GM12878 (cell line): ENCODE measurements at regions of chr3 and their contacts with region 1.

Region 1: DNA sequence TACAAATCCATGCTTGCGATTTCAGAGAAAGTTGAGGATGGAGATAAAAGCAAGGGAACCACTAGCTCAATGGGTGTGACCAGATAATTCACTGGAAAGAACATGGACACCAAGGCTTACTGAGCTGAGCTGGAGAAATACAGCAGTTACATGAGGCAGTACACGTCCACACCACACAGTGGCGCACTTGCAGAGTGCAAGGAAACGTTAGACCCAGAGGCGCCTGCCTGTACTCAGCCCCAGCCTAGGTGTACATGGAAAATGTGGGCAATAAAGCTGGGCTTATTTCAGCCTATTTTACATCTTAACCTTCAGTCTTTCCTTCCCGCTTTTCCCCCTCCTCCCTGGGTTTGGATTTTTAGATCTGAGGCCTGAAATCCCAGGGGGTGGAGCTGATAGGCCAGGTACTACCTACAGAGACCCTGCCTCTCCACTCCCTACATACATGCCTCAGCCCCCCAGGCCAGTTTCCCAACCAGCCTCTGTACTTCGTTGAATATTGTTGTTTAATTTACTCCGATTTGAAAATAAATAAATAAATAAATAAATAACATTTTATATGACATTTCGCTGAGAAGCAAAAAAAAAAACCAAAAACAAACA is 60.1 kb downstream of the PCOLCE2 start:
- DNase-seq: peak; percentile 31
- ATAC-seq: peak; percentile 100
- H3K4me3 ChIP-seq: no peak overlapping the region
- H3K27ac ChIP-seq: no peak overlapping the region
- H3K4me1 ChIP-seq: no peaks in the 10 kb centered on the region
- H3K27me3 ChIP-seq: no peaks in the 10 kb centered on the region
- CTCF ChIP-seq: peak; percentile 88 to 94 (median 92); a peak in 5 of 6 replicates
- EP300 ChIP-seq: no peak
- POLR2A ChIP-seq: no peak
- RAD21 ChIP-seq: peak; percentile 88

Region 2: DNA sequence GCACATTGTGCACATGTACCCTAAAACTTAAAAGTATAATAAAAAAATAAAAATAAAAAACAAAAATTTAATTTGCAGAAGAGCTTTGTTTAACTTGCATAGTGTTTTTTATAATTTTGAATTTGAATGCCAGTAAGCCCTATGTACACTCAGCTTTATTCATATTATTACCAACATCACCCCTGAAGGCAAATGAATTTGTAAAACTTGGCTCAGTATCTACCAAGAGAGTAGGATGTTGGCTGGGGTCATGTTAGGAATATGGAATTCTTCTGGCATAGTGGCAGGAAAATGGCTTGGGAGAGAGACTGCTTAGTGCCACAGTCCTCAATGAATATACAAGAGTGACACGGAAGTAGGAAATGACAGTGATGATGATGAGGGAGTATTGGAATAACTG is 74.3 kb before region 1 on chr3:
- CTCF ChIA-PET with region 1: no interaction called
- POLR2A ChIA-PET with region 1: no interaction called
- RAD21 ChIA-PET with region 1: no interaction called
- SMC1A ChIA-PET with region 1: no interaction called
- in situ Hi-C with region 1: no loop called
- intact Hi-C with region 1: no loop called
- DNase-seq: no peak
- ATAC-seq: no peak
- H3K4me3 ChIP-seq: no peak overlapping the region
- H3K27ac ChIP-seq: no peak overlapping the region
- H3K4me1 ChIP-seq: no peaks in the 10 kb centered on the region
- H3K27me3 ChIP-seq: no peaks in the 10 kb centered on the region
- CTCF ChIP-seq: no peak
- EP300 ChIP-seq: no peak
- POLR2A ChIP-seq: no peak
- RAD21 ChIP-seq: no peak

Region 3: DNA sequence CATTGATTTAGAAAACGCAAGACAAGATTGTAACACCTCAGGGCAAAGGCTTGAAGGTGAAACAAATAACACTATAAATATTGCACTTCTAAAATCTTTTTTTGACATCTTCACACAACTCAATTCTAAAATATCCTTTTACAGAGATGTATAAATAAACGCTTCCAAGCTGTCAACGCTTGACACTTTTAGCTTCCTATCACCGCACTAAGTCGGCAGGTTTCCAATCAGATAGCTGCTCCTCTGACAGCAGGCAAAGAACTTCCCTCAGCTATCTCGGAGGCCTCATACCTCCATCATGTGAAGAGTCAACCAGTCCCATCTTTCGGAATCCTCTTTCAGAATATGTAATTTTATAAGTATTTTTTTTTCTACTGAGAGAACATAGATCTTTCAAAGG is 10.9 kb before region 1 on chr3:
- CTCF ChIA-PET with region 1: interaction called, 17 read pairs
- POLR2A ChIA-PET with region 1: no interaction called
- RAD21 ChIA-PET with region 1: interaction called, 10 read pairs
- SMC1A ChIA-PET with region 1: interaction called, 4 read pairs
- in situ Hi-C with region 1: no loop called
- intact Hi-C with region 1: no loop called
- DNase-seq: no peak
- ATAC-seq: no peak
- H3K4me3 ChIP-seq: no peak overlapping the region
- H3K27ac ChIP-seq: no peak overlapping the region
- H3K4me1 ChIP-seq: no peaks in the 10 kb centered on the region
- H3K27me3 ChIP-seq: no peaks in the 10 kb centered on the region; a peak in 2 of 4 replicates
- CTCF ChIP-seq: no peak
- EP300 ChIP-seq: no peak
- POLR2A ChIP-seq: no peak
- RAD21 ChIP-seq: no peak

Region 4: DNA sequence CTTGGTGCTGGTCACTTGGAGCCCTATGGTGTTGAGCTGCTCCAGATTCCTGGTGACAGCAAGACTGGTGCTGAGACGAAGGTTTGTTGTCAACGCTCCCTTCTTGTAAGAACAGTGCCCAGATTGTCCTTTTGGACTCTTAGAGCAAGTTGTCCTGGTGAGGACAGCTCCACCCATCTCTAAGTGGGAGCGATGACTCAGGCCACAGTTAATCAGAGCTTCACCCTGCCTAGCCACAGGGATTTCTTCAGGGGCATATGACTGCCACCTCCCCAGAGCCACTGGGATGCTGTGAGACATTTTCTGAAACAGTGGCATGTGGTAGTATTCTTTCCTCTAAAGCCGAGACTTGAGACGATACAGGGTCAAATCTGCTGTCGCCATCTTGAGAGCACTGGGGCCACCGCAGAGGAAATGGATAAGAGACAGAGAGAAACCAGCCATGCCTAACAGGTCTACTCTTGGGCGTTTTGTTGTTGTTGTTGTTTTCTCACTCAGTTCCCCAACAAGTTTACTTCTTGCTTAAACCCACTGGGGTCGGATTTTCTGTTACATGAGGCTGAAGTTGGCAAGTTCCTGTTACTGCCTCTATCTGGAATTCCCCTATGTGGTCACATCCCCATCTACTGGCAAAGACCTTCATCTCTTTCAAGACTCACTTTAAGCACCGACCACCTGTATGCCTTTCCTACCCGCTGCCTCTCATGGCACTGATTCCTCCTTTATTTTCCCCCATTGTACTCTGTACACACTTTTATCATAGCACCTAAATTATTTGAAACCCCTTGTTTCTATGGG is 76.0 kb after region 1 on chr3:
- CTCF ChIA-PET with region 1: interaction called, 11 read pairs
- POLR2A ChIA-PET with region 1: no interaction called
- RAD21 ChIA-PET with region 1: interaction called, 4 read pairs
- SMC1A ChIA-PET with region 1: no interaction called
- in situ Hi-C with region 1: no loop called
- intact Hi-C with region 1: no loop called
- DNase-seq: no peak
- ATAC-seq: peak; percentile 79
- H3K4me3 ChIP-seq: no peak overlapping the region
- H3K27ac ChIP-seq: no peak overlapping the region
- H3K4me1 ChIP-seq: peaks cover 6% of the 10 kb centered on the region
- H3K27me3 ChIP-seq: no peaks in the 10 kb centered on the region
- CTCF ChIP-seq: peak in 1 of 3 experiments; percentile 10; a peak in 1 of 6 replicates
- EP300 ChIP-seq: no peak
- POLR2A ChIP-seq: no peak
- RAD21 ChIP-seq: 0 out of 2 replicates have a peak, but pooled peaks have one; percentile 27

Region 5: GRCh38 chr3:142987080-142987700 is 158.4 kb after region 1 on chr3:
- CTCF ChIA-PET with region 1: interaction called, 136 read pairs
- POLR2A ChIA-PET with region 1: no interaction called
- RAD21 ChIA-PET with region 1: interaction called, 19 read pairs
- SMC1A ChIA-PET with region 1: interaction called, 25 read pairs
- in situ Hi-C with region 1: loop called (anchors 5 kb)
- intact Hi-C with region 1: loop called (anchors 2 kb)
- DNase-seq: no peak
- ATAC-seq: peak; percentile 72
- H3K4me3 ChIP-seq: no peak overlapping the region
- H3K27ac ChIP-seq: no peak overlapping the region
- H3K4me1 ChIP-seq: 0 out of 2 replicates have a peak, but pooled peaks cover 3% of the 10 kb centered on the region
- H3K27me3 ChIP-seq: no peaks in the 10 kb centered on the region
- CTCF ChIP-seq: peak; percentile 49 to 61 (median 56); a peak in 5 of 6 replicates
- EP300 ChIP-seq: no peak
- POLR2A ChIP-seq: no peak
- RAD21 ChIP-seq: peak; percentile 63

Region 6: DNA sequence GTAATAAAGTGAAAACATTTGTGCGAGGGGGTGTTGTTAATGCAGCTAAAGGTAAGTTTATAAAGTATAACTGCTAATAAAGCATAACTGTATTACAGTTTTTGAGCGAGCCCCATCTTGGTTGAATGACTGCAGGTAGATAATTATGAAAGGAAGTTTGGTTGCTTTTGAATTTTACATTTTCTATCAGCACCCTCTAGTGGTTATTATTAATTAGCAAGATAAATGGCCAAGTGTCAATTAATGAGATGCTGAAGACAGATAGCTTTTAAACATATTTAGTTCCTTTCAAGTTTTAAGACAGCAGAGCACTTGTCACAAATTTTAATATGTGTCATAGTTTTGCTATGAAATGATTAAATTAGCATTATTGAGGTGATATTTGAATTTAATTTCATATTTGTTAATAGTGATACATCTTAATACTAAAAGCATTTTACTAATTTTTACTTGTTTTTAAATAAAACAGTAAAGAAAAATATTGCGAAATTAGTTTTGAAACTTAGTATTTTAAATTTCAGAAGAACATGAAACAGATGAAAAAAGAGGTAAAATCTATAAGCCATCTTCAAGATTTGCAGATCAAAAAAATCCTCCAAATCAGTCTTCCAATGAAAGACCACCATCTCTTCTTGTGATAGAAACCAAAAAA is 187.6 kb after region 1 on chr3:
- CTCF ChIA-PET with region 1: interaction called, 20 read pairs
- POLR2A ChIA-PET with region 1: no interaction called
- RAD21 ChIA-PET with region 1: interaction called, 5 read pairs
- SMC1A ChIA-PET with region 1: interaction called, 3 read pairs
- in situ Hi-C with region 1: no loop called
- intact Hi-C with region 1: no loop called
- DNase-seq: no peak
- ATAC-seq: peak; percentile 65
- H3K4me3 ChIP-seq: no peak overlapping the region; the same call in 1 of the 2 replicates
- H3K27ac ChIP-seq: no peak overlapping the region
- H3K4me1 ChIP-seq: no peaks in the 10 kb centered on the region; the same call in 1 of the 2 replicates
- H3K27me3 ChIP-seq: no peaks in the 10 kb centered on the region
- CTCF ChIP-seq: peak; percentile 28 to 50 (median 45); a peak in 3 of 6 replicates
- EP300 ChIP-seq: no peak
- POLR2A ChIP-seq: no peak
- RAD21 ChIP-seq: peak; percentile 33; the same call in 1 of the 2 replicates